ENCODE measurements at regions of chr6 and their contacts with region 1.

Region 1: GRCh38 chr6:79193971-79194370 is 40.5 kb downstream of the HMGN3 start:
- DNase-seq: no peak
- ATAC-seq: no peak

Region 2: DNA sequence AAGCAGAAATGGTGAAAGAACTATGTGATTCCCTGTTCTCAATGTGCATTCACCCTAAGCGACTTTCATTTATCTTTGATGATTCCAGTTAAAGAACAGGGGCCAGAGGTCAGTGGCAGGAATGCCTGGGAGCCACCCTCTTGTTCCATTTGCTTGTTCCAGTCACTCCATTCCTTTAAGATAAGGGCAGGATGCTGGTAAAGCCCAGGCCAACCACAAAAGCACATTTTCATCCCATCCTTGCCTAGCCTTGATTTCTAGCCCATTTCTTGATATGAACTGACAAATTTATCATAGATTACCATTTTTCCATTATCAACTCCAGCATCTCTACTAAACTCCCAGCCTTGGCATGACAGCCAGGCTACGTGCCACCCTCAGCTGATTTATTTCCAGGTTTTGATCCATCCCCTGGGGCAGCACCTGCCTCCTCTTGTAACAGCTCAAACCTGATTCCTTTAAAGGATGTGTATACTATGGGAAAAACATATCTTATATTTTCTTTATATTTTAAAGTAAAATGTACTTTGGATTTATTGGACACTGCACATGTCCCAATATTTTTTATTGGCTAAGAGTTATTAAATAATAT is 21.4 kb after region 1 on chr6:
- intact Hi-C with region 1: loop called (anchors 2 kb)
- DNase-seq: no peak
- ATAC-seq: no peak